ENCODE measurements at regions of chr12 and their contacts with region 1.

Region 1: GRCh38 chr12:14272956-14273907 is 92.2 kb upstream of the ATF7IP start:
- DNase-seq: no peak
- H3K4me3 ChIP-seq: no peak overlapping the region
- H3K27ac ChIP-seq: no peak overlapping the region
- H3K4me1 ChIP-seq: no peaks in the 10 kb centered on the region; a peak in 3 of 7 replicates
- H3K27me3 ChIP-seq: no peaks in the 10 kb centered on the region; a peak in 2 of 7 replicates
- CTCF ChIP-seq: no peak
- EP300 ChIP-seq: no peak
- POLR2A ChIP-seq: no peak
- RAD21 ChIP-seq: no peak

Region 2: GRCh38 chr12:14365294-14366208 is 92.3 kb after region 1 on chr12 and contains the start of gene ATF7IP:
- CTCF ChIA-PET with region 1: no interaction called
- POLR2A ChIA-PET with region 1: interaction called, 13 read pairs
- DNase-seq: peak; percentile 88 to 93
- H3K4me3 ChIP-seq: peak within 1 kb of the TSS; percentile 65 to 90 (median 73)
- H3K27ac ChIP-seq: peak within 1 kb of the TSS; percentile 91
- H3K4me1 ChIP-seq: peaks cover 0 to under 1% (median 0%) of the 10 kb centered on the region in 4 experiments; a peak in 1 of 7 replicates
- H3K27me3 ChIP-seq: no peaks in the 10 kb centered on the region
- CTCF ChIP-seq: peak in 1 of 3 experiments; percentile 17; a peak in 2 of 4 replicates
- EP300 ChIP-seq: peak in 1 of 2 experiments; percentile 66; a peak in 1 of 3 replicates
- POLR2A ChIP-seq: peak; percentile 93 to 98
- RAD21 ChIP-seq: peak; percentile 19 to 26; a peak in 2 of 4 replicates
- total RNA-seq, gene ATF7IP: 148 and 149 TPM in 2 replicates